A549 (cell line): ENCODE measurements at regions of chr5 and their contacts with region 1.

Region 1: DNA sequence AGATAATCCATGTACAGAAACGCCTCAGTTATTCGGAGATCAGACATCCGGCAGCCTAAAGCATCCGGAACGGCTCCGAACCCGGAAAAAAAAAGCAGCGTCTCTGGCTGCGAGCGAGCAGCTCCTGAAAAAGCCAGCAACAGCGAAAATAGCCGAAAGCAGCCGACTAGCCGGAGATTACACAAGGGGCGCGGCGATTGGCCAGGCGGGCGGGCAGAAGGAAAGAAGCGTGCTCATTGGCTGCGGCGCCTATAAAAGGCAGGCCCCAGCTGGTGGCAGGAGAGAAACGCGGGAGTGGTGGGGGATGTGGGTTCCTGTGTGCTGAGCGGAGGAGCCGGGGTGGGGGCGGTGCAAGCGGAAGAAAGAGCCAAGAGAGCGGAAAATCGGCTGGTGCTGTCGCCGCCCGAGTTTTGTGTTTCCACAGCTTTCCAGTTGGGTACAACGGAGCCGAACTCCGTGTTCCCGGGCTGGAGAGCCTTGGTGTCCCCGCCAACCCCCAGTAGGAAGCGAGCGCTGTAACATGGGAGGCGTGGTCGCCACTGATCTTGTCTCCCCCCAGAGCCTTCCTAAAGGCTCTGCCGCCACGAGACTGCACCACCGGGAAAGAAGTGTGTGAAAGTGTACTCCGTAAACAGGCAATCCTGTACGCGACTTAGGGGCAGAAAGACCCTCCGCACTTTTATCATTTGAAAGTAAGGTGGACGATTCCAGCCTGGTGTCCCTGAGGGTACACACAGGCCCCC is at the start of gene ARL15:
- DNase-seq: peak; percentile 95 to 98
- ATAC-seq: peak; percentile 94 to 97
- H3K4me3 ChIP-seq: peak within 1 kb of the TSS; percentile 86
- H3K27ac ChIP-seq: peak within 1 kb of the TSS; percentile 83 to 89
- H3K4me1 ChIP-seq: peaks cover 13% of the 10 kb centered on the region; the same call in 1 of the 3 replicates
- CTCF ChIP-seq: no peak
- EP300 ChIP-seq: no peak
- POLR2A ChIP-seq: peak; percentile 98
- RAD21 ChIP-seq: no peak
- polyA plus RNA-seq, gene ARL15: 11.8 and 15.9 TPM in 2 replicates

Region 2: GRCh38 chr5:54243473-54244080 is 67.0 kb before region 1 on chr5:
- CTCF ChIA-PET with region 1: interaction called, 6 read pairs
- POLR2A ChIA-PET with region 1: interaction called, 10 read pairs
- DNase-seq: peak; percentile 12 to 52
- ATAC-seq: peak; percentile 50 to 65; a peak in 3 of 6 replicates
- H3K4me3 ChIP-seq: no peak overlapping the region
- H3K27ac ChIP-seq: no peak overlapping the region
- H3K4me1 ChIP-seq: 0 out of 3 replicates have a peak, but pooled peaks cover 3% of the 10 kb centered on the region
- CTCF ChIP-seq: peak; percentile 84
- EP300 ChIP-seq: no peak
- POLR2A ChIP-seq: no peak
- RAD21 ChIP-seq: peak; percentile 80

Region 3: GRCh38 chr5:54329731-54330709 is 19.4 kb after region 1 on chr5:
- CTCF ChIA-PET with region 1: interaction called, 4 read pairs
- POLR2A ChIA-PET with region 1: interaction called, 44 read pairs
- DNase-seq: peak in 1 of 2 experiments; percentile 44
- ATAC-seq: peak; percentile 82 to 83
- H3K4me3 ChIP-seq: no peak overlapping the region
- H3K27ac ChIP-seq: peak overlapping the region; percentile 1 to 22; a peak in 1 of 6 replicates
- H3K4me1 ChIP-seq: no peaks in the 10 kb centered on the region
- CTCF ChIP-seq: no peak
- EP300 ChIP-seq: no peak
- POLR2A ChIP-seq: no peak
- RAD21 ChIP-seq: no peak

Region 4: GRCh38 chr5:54360089-54360488 is 49.5 kb after region 1 on chr5:
- CTCF ChIA-PET with region 1: no interaction called
- POLR2A ChIA-PET with region 1: interaction called, 11 read pairs
- DNase-seq: peak; percentile 21 to 53
- ATAC-seq: peak; percentile 77 to 90
- H3K4me3 ChIP-seq: no peak overlapping the region
- H3K27ac ChIP-seq: peak overlapping the region; percentile 52 to 56; a peak in 4 of 6 replicates
- H3K4me1 ChIP-seq: peaks cover 28% of the 10 kb centered on the region; the same call in 2 of the 3 replicates
- CTCF ChIP-seq: no peak
- EP300 ChIP-seq: no peak
- POLR2A ChIP-seq: no peak
- RAD21 ChIP-seq: no peak

Region 5: GRCh38 chr5:54415896-54416601 is 105.4 kb after region 1 on chr5:
- CTCF ChIA-PET with region 1: interaction called, 8 read pairs
- POLR2A ChIA-PET with region 1: interaction called, 21 read pairs
- DNase-seq: peak in 1 of 2 experiments; percentile 56
- ATAC-seq: peak; percentile 62 to 86; a peak in 4 of 6 replicates
- H3K4me3 ChIP-seq: no peak overlapping the region
- H3K27ac ChIP-seq: peak overlapping the region; percentile 17 to 40; a peak in 1 of 6 replicates
- H3K4me1 ChIP-seq: no peaks in the 10 kb centered on the region
- CTCF ChIP-seq: no peak
- EP300 ChIP-seq: no peak
- POLR2A ChIP-seq: no peak
- RAD21 ChIP-seq: no peak